PC-9 (cell line): ENCODE measurements at regions of chr10 and their contacts with region 1.

Region 1: DNA sequence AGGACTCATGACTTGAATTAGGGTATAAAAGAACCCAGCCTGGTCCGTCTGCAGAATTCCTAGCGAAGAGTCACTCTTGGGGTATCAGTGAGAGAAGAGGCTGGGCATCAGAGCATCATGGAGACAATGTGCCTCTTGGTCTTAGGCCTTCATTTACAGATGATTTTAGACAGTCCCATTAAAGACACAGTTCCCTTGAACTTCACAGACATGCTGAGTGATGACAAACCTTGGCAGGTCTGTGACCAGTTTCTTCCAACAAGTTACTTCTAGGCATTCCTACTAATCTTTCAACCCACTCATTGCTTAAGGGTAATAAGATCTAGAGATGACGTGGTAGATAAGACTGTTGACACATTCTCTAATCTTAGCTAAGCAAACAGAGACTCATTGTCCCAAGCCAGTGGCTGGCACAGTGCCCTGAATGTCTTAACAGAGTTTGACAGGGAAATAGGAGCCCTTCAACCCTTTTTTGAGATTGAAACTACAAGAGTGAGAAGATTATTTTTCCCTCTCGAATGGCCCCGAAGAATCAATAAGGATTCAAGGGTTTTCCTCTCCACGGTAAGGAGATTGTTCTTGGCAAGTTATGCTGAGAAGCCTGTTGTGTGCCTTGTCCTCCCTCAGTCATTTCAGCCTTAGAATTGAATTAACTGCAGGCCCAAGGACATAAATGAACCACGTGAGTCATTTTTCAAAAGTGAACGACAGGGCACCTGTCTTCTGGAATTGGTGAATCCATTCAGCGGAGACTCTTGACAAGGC is 281.1 kb downstream of the CCDC3 start:
- DNase-seq: peak; percentile 85 to 97
- H3K4me3 ChIP-seq: peak overlapping the region; percentile 19; the same call in 1 of the 2 replicates
- H3K27ac ChIP-seq: peak overlapping the region; percentile 66
- H3K4me1 ChIP-seq: peaks cover 35% of the 10 kb centered on the region
- H3K27me3 ChIP-seq: no peaks in the 10 kb centered on the region
- CTCF ChIP-seq: no peak

Region 2: GRCh38 chr10:12681252-12681651 is 39.1 kb before region 1 on chr10:
- CTCF ChIA-PET with region 1: no interaction called
- POLR2A ChIA-PET with region 1: no interaction called
- intact Hi-C with region 1: no loop called
- DNase-seq: no peak
- H3K4me3 ChIP-seq: no peak overlapping the region
- H3K27ac ChIP-seq: no peak overlapping the region
- H3K4me1 ChIP-seq: no peaks in the 10 kb centered on the region
- H3K27me3 ChIP-seq: no peaks in the 10 kb centered on the region
- CTCF ChIP-seq: no peak

Region 3: GRCh38 chr10:12703813-12704212 is 16.6 kb before region 1 on chr10:
- CTCF ChIA-PET with region 1: no interaction called
- POLR2A ChIA-PET with region 1: interaction called, 10 read pairs
- intact Hi-C with region 1: no loop called
- DNase-seq: peak in 1 of 2 experiments; percentile 86
- H3K4me3 ChIP-seq: peak overlapping the region; percentile 34; the same call in 1 of the 2 replicates
- H3K27ac ChIP-seq: peak overlapping the region; percentile 98
- H3K4me1 ChIP-seq: peaks cover 69% of the 10 kb centered on the region
- H3K27me3 ChIP-seq: no peaks in the 10 kb centered on the region
- CTCF ChIP-seq: no peak

Region 4: GRCh38 chr10:13074561-13075451 is 354.4 kb after region 1 on chr10:
- CTCF ChIA-PET with region 1: no interaction called
- POLR2A ChIA-PET with region 1: no interaction called
- intact Hi-C with region 1: loop called (anchors 5 kb)
- DNase-seq: peak; percentile 37 to 64
- H3K4me3 ChIP-seq: no peak overlapping the region
- H3K27ac ChIP-seq: no peak overlapping the region
- H3K4me1 ChIP-seq: no peaks in the 10 kb centered on the region
- H3K27me3 ChIP-seq: no peaks in the 10 kb centered on the region
- CTCF ChIP-seq: peak; percentile 81